Activated CD4-positive, alpha-beta T cell treated with anti-CD3 and anti-CD28 coated beads for 36 hours (primary cell): ENCODE measurements at regions of chr2 and their contacts with region 1.

Region 1: GRCh38 chr2:233251306-233252116 is at the start of gene ATG16L1:
- DNase-seq: peak; percentile 98
- ATAC-seq: peak; percentile 82
- H3K4me3 Mint-ChIP-seq: peak within 1 kb of the TSS; percentile 85
- H3K27ac Mint-ChIP-seq: peak within 1 kb of the TSS; percentile 98
- H3K4me1 Mint-ChIP-seq: peaks cover 66% of the 10 kb centered on the region
- H3K27me3 Mint-ChIP-seq: no peaks in the 10 kb centered on the region
- total RNA-seq, gene ATG16L1: 23.0 to 24.6 TPM

Region 2: GRCh38 chr2:231780909-231781797 is 1470.4 kb before region 1 on chr2 and contains the start of gene PDE6D:
- CTCF ChIA-PET with region 1: no interaction called
- POLR2A ChIA-PET with region 1: no interaction called
- intact Hi-C with region 1: loop called in 1 of 2 experiments (anchors 2 kb)
- DNase-seq: peak; percentile 97
- ATAC-seq: peak; percentile 93
- H3K4me3 Mint-ChIP-seq: peak within 1 kb of the TSS; percentile 83
- H3K27ac Mint-ChIP-seq: peak within 1 kb of the TSS; percentile 92
- H3K4me1 Mint-ChIP-seq: peaks cover 44% of the 10 kb centered on the region
- H3K27me3 Mint-ChIP-seq: no peaks in the 10 kb centered on the region
- total RNA-seq, gene PDE6D: 28.0 to 31.1 TPM

Region 3: DNA sequence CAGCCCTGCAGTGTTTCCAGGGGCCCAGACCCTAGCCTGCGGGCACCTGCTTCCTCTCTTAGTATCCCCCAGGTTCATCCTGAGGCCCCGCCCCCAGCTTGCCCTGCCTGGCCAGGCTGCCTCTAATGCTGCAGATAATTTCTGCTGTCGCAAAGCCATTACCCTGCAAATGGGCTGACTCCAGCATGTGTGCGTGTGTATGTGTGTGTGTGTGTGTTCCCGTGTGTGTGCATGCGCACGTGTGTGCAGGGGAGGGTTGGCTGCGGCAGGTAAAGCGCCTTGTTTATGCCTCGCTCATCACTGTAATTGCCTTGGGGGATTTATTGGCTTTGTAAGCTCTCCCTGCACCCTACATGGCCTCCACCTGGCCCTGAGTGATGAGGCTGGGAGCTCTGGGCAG is 738.9 kb before region 1 on chr2:
- CTCF ChIA-PET with region 1: no interaction called
- POLR2A ChIA-PET with region 1: no interaction called
- intact Hi-C with region 1: no loop called
- DNase-seq: no peak
- ATAC-seq: no peak
- H3K4me3 Mint-ChIP-seq: no peak overlapping the region
- H3K27ac Mint-ChIP-seq: no peak overlapping the region
- H3K4me1 Mint-ChIP-seq: no peaks in the 10 kb centered on the region
- H3K27me3 Mint-ChIP-seq: peaks cover 2% of the 10 kb centered on the region

Region 4: DNA sequence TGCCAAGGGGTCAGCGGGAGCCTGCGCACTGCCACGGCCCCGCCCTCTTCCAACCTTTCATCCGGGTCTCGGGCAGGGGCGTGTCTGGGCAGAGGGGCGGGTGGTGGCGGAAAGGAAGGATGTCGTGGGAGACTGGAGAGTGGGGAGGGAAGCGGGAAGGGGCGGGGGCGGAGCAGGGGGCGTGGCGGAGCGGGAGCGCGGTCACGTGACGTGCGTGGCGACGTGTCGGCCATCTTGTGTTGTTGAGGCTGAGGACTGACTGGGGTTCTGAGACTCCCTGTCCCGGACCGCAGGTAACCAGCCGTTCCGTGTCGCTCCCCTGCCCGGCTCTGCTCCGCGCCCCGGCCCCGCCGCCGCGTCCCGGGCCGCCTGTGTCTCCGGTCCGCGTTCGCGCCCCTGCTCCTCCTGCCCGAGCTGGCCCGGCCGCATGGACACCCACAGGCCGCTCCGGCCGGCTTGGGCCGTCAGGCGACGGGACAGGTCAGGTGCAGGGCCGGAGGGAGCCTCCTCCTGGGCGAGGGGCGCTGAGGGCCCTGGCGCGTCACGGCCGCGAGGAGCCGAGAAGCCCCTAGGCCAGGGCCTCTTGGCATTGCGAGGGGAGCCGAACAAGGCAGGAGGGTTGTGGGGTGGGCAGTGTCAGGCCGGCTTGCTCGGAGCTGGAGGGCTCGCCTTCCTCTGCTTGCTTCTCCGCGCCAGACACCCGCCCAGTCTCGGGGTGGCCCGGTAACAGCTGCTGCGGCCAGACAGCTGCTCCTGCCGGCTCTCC is 554.2 kb before region 1 on chr2 and contains the start of gene GIGYF2:
- CTCF ChIA-PET with region 1: no interaction called
- POLR2A ChIA-PET with region 1: no interaction called
- intact Hi-C with region 1: loop called in 1 of 2 experiments (anchors 1 kb)
- DNase-seq: peak; percentile 98
- ATAC-seq: peak; percentile 92
- H3K4me3 Mint-ChIP-seq: peak within 1 kb of the TSS; percentile 99
- H3K27ac Mint-ChIP-seq: peak within 1 kb of the TSS; percentile 87
- H3K4me1 Mint-ChIP-seq: peaks cover 36% of the 10 kb centered on the region
- H3K27me3 Mint-ChIP-seq: no peaks in the 10 kb centered on the region
- total RNA-seq, gene GIGYF2: 51.1 to 51.9 TPM

Region 5: DNA sequence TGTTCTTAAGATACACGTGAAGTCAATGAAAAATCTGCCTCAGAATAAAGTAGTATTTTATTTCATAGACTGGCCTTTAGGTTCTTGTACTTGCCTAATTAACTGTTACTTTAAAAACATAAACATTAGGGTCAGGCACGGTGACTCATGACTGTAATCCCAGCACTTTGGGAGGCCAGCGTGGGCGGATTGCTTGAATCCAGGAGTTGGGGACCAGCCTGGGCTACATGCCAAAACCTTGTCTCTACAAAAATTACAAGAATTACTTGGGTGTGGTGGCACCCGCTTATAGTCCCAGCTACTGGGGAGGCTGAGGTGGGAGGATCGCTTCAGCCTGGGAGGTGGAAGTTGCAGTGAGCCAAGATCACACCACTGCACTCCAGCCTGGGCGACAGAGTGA is 397.4 kb before region 1 on chr2:
- CTCF ChIA-PET with region 1: interaction called, 11 read pairs
- POLR2A ChIA-PET with region 1: no interaction called
- intact Hi-C with region 1: loop called (anchors 1 kb)
- DNase-seq: no peak
- ATAC-seq: no peak
- H3K4me3 Mint-ChIP-seq: no peak overlapping the region
- H3K27ac Mint-ChIP-seq: no peak overlapping the region
- H3K4me1 Mint-ChIP-seq: peaks cover 3% of the 10 kb centered on the region
- H3K27me3 Mint-ChIP-seq: no peaks in the 10 kb centered on the region

Region 6: DNA sequence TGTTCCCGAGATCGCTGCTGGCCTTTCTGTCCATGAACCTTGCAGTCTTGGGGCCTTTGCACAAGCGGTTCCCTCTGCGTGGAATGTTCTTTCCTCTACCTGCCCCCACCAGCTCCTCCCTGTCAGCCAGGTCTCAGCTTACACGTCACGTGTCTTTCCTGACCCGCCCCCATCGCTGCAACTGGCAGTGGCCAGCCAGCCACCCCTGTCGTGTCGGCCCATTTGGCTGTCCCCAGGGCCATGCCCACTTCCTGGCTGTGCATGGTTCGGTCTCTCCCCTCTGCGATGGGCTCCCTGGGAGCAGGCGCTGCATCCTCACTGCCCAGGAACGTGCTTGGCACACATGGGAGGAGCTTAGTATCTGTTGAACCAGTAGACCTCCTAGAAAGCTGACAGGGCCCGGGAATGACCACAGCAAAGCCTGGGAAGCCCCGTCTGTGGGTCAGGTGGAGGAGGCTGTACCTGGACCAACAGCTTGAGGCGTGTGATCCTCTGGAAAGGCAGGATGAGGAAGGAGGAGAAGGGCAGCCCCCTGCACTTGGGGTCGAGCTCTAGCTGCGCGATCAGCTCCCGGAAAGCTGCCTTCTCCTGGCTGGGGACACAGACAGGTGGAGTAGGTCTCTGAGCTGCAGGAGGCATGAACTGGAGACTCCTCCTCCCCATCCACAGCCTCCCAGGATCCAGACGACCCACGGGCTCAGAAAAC is 360.5 kb before region 1 on chr2:
- CTCF ChIA-PET with region 1: no interaction called
- POLR2A ChIA-PET with region 1: no interaction called
- intact Hi-C with region 1: no loop called
- DNase-seq: no peak
- ATAC-seq: no peak
- H3K4me3 Mint-ChIP-seq: no peak overlapping the region
- H3K27ac Mint-ChIP-seq: no peak overlapping the region
- H3K4me1 Mint-ChIP-seq: peaks cover 2% of the 10 kb centered on the region
- H3K27me3 Mint-ChIP-seq: peaks cover 11% of the 10 kb centered on the region

Region 7: GRCh38 chr2:233084488-233084887 is 167.0 kb before region 1 on chr2:
- CTCF ChIA-PET with region 1: interaction called, 3 read pairs
- POLR2A ChIA-PET with region 1: no interaction called
- intact Hi-C with region 1: loop called (anchors 1 kb)
- DNase-seq: peak; percentile 72
- ATAC-seq: peak; percentile 5
- H3K4me3 Mint-ChIP-seq: peak overlapping the region; percentile 50
- H3K27ac Mint-ChIP-seq: peak overlapping the region; percentile 87
- H3K4me1 Mint-ChIP-seq: peaks cover 79% of the 10 kb centered on the region
- H3K27me3 Mint-ChIP-seq: no peaks in the 10 kb centered on the region

Region 8: GRCh38 chr2:233353769-233354499 is 102.4 kb after region 1 on chr2 and contains the start of gene DGKD:
- CTCF ChIA-PET with region 1: interaction called, 3 read pairs
- POLR2A ChIA-PET with region 1: no interaction called
- intact Hi-C with region 1: loop called in 1 of 2 experiments (anchors 5 kb)
- DNase-seq: peak; percentile 88
- ATAC-seq: peak; percentile 62
- H3K4me3 Mint-ChIP-seq: peak within 1 kb of the TSS; percentile 85
- H3K27ac Mint-ChIP-seq: peak within 1 kb of the TSS; percentile 80
- H3K4me1 Mint-ChIP-seq: peaks cover 63% of the 10 kb centered on the region
- H3K27me3 Mint-ChIP-seq: no peaks in the 10 kb centered on the region
- total RNA-seq, gene DGKD: 57.0 to 62.6 TPM